H1 (cell line): ENCODE measurements at regions of chr20 and their contacts with region 1.

Region 1: GRCh38 chr20:8305449-8305978 is 173.4 kb downstream of the PLCB1 start:
- DNase-seq: peak; percentile 72 to 75
- H3K4me3 ChIP-seq: no peak overlapping the region
- H3K27ac ChIP-seq: no peak overlapping the region
- H3K4me1 ChIP-seq: peaks cover 0 to 5% (median 2%) of the 10 kb centered on the region in 4 experiments; a peak in 4 of 7 replicates
- H3K27me3 ChIP-seq: no peaks in the 10 kb centered on the region
- CTCF ChIP-seq: peak; percentile 77 to 91 (median 79)
- EP300 ChIP-seq: no peak
- POLR2A ChIP-seq: no peak
- RAD21 ChIP-seq: peak; percentile 64 to 71

Region 2: DNA sequence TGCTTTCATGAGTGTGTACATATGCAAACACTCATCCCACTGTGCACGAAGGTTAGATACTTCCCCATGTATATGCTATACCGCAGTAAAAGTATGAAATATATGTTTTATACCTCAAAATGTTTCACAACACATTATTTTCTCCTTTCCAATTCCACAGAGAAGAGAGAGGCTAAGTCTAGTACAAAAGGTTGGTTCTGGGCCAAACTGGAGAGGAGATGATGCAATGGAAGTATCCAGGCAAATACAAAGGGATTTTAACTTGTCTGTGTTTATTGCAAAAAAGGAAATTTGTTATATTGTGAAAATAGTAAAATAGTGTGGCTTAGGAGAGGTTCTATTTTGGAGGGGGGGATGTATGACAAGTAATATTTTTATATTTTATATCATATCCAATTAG is 60.9 kb before region 1 on chr20:
- CTCF ChIA-PET with region 1: no interaction called
- POLR2A ChIA-PET with region 1: no interaction called
- DNase-seq: no peak
- H3K4me3 ChIP-seq: no peak overlapping the region
- H3K27ac ChIP-seq: no peak overlapping the region
- H3K4me1 ChIP-seq: no peaks in the 10 kb centered on the region
- H3K27me3 ChIP-seq: no peaks in the 10 kb centered on the region
- CTCF ChIP-seq: no peak
- EP300 ChIP-seq: no peak
- POLR2A ChIP-seq: no peak
- RAD21 ChIP-seq: no peak

Region 3: DNA sequence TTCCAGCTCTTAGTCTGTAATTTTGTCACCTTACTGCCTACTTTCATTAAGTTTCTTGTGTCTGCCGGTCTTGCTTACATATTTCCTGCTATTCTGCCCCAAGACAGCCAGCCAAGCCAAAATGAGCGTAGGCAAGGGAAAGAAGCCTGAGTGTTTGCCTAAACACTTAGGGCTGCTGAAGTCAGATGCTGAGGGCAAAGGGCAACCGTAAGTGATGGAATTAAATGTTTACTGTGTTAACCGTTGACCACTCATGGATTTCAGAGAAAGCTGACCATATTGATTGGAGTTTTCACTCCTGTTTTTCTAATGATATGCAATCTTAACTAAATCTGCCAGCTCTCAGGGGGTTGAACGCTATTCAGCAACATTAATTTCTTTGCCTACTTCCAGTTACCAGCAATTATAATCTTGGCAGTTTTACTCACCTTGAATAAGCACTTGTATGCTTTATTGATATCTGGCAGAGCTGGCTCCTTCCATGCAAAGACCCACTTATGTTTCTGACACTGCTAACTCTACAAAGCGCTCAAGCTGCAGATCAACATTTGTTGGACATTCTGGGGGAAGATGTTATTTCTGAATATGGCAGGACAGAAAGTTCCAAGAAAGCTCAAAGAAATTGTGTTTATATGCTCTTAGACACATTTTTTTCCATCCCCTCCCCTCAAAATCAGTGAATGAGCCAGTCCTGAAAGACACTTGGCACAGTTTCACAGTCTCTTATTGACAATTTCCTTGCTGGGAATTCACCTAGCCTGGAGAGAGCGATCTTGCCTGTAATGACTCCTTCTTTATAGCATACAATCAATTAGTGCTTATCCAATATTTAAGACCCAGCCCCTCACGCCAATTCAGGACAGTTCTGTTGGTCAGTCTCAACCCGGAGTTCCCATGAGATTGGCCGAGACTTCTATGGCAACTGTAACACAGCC is 10.4 kb after region 1 on chr20:
- CTCF ChIA-PET with region 1: interaction called, 21 read pairs
- POLR2A ChIA-PET with region 1: no interaction called
- DNase-seq: no peak
- H3K4me3 ChIP-seq: no peak overlapping the region
- H3K27ac ChIP-seq: no peak overlapping the region
- H3K4me1 ChIP-seq: peaks cover 0 to 3% (median 0%) of the 10 kb centered on the region in 4 experiments; a peak in 2 of 7 replicates
- H3K27me3 ChIP-seq: no peaks in the 10 kb centered on the region
- CTCF ChIP-seq: no peak
- EP300 ChIP-seq: no peak
- POLR2A ChIP-seq: no peak
- RAD21 ChIP-seq: no peak